Gastrocnemius medialis (tissue), 4 donors: ENCODE measurements at regions of chr10 and their contacts with region 1.

Region 1: GRCh38 chr10:31707093-31708039 is 221.3 kb downstream of the ARHGAP12 start:
- DNase-seq: peak; percentile 37 to 46
- ATAC-seq: peak; percentile 5 to 24
- H3K4me3 ChIP-seq: peak overlapping the region in 1 of 4 donors; percentile 21
- H3K27ac ChIP-seq: peak overlapping the region; percentile 83 to 94 (median 88)
- H3K4me1 ChIP-seq: peaks cover 35 to 41% of the 10 kb centered on the region in 2 donors
- H3K27me3 ChIP-seq: no peaks in the 10 kb centered on the region
- CTCF ChIP-seq: no peak
- POLR2A ChIP-seq: peak in 1 of 2 donors; percentile 18

Region 2: GRCh38 chr10:31723106-31723750 is 15.9 kb after region 1 on chr10:
- in situ Hi-C with region 1: no loop called
- intact Hi-C with region 1: no loop called
- DNase-seq: no peak
- ATAC-seq: no peak
- H3K4me3 ChIP-seq: no peak overlapping the region
- H3K27ac ChIP-seq: no peak overlapping the region
- H3K4me1 ChIP-seq: no peaks in the 10 kb centered on the region
- H3K27me3 ChIP-seq: no peaks in the 10 kb centered on the region
- CTCF ChIP-seq: no peak
- POLR2A ChIP-seq: no peak

Region 3: DNA sequence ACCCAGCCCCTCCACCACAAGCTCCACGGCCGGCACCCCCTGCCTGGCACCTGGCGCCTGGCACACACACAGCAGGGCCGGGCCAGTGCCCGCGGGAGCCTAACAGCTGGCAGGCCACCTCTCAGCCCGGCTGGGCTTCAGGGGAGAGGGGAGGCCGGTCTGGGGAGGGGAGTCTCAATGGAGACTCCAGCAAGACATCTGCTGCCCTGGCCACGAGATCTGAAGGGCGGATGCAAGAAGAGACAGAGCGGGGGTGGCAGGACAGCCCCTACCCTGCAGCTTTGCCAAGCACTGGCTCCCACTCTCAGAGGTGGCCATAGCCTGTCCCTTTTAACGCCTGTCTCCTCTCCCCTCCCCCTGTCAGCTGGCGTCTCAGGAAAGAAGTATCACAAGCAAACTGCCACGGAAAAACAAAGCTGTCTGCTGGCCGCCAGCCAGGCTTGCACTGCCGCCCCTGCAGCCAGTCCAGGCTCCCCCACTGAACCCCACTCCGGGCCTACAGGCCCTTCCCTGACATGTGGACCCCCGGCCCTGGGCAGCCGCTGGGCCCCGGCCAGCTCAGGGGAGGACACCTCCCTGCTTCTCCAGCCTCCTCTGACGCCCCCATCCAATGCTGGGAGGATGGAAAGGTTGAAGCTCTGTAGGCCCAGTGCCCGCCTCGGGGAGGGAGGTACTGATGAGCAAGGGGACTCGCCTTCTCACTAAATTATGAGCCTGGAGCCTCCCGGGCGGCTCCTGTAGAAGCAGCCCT is 42.8 kb after region 1 on chr10:
- in situ Hi-C with region 1: loop called in 1 of 4 experiments (anchors 5 kb)
- intact Hi-C with region 1: no loop called
- DNase-seq: no peak
- ATAC-seq: peak; percentile 25 to 32
- H3K4me3 ChIP-seq: peak overlapping the region in 2 of 4 donors; percentile 19 to 20
- H3K27ac ChIP-seq: peak overlapping the region; percentile 61 to 74 (median 69)
- H3K4me1 ChIP-seq: peaks cover 29 to 38% of the 10 kb centered on the region in 2 donors
- H3K27me3 ChIP-seq: no peaks in the 10 kb centered on the region
- CTCF ChIP-seq: no peak
- POLR2A ChIP-seq: no peak

Region 4: GRCh38 chr10:31759799-31760626 is 52.6 kb after region 1 on chr10:
- in situ Hi-C with region 1: no loop called
- intact Hi-C with region 1: loop called (anchors 1 kb)
- DNase-seq: peak; percentile 95
- ATAC-seq: peak; percentile 88 to 92
- H3K4me3 ChIP-seq: peak overlapping the region; percentile 67 to 89 (median 83)
- H3K27ac ChIP-seq: peak overlapping the region; percentile 95 to 97 (median 96)
- H3K4me1 ChIP-seq: peaks cover 16 to 33% of the 10 kb centered on the region in 2 donors
- H3K27me3 ChIP-seq: no peaks in the 10 kb centered on the region
- CTCF ChIP-seq: no peak
- POLR2A ChIP-seq: peak; percentile 88 to 93

Region 5: DNA sequence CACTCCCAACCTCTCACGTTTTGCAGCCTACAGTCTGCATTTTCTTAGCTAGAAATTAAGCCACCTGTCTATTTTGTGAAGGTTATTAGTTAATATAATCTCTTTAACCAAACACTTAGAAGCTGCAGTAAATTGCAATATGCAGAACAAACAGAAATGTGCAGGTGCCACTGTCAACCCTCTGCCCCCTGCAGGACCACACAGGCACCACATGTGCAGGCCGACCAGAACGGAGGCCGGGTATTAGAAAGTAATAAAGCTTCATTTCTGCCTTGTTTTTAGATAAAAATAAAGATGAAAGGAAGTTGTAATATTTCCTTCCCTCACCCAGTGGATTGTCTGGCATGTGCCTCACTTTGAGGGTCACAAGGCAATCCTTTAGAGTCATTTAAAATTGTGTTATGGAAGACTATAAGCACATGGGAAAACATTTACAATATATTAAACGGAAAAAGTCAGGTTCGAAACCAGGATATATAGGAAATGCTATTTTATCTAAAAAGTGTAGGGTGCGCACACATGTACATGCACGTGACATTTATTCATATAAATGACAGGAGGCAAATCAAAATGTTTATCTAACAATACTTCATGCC is 63.0 kb after region 1 on chr10:
- in situ Hi-C with region 1: no loop called
- intact Hi-C with region 1: loop called (anchors 2 kb)
- DNase-seq: no peak
- ATAC-seq: no peak
- H3K4me3 ChIP-seq: no peak overlapping the region
- H3K27ac ChIP-seq: peak overlapping the region in 2 of 4 donors; percentile 92 to 95
- H3K4me1 ChIP-seq: peaks cover 13 to 36% of the 10 kb centered on the region in 2 donors
- H3K27me3 ChIP-seq: no peaks in the 10 kb centered on the region
- CTCF ChIP-seq: peak; percentile 59 to 72 (median 65)
- POLR2A ChIP-seq: no peak

Region 6: DNA sequence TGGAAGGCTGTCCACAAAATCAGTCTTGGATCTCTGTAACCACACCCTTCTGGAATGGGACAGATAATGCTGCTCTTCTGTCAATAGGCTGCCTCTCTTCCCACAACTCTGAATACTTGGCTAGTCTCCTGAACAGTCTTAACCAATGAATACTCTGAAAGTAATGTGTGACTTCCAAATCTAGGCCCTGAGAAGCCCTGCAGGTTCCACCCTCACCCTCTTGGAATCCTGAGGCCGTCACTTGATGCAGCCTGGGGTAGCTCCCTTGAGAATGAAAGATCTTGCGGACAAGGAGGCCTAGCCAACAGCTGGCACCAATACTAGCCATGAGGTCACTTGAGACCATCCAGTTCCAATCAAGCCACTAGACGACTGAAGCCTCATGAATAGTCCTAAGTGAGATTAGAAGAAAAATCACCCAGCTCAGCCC is 112.0 kb after region 1 on chr10:
- in situ Hi-C with region 1: loop called in 3 of 4 experiments (anchors 5 to 10 kb)
- intact Hi-C with region 1: no loop called
- DNase-seq: peak; percentile 6 to 62
- ATAC-seq: peak; percentile 42 to 51
- H3K4me3 ChIP-seq: no peak overlapping the region
- H3K27ac ChIP-seq: peak overlapping the region in 3 of 4 donors; percentile 12 to 39 (median 19)
- H3K4me1 ChIP-seq: peaks cover 19 to 24% of the 10 kb centered on the region in 2 donors
- H3K27me3 ChIP-seq: no peaks in the 10 kb centered on the region
- CTCF ChIP-seq: no peak
- POLR2A ChIP-seq: no peak